ENCODE measurements at regions of chr7 and their contacts with region 1.

Region 1: GRCh38 chr7:75738987-75739795 is 450 bp upstream of the HIP1 start:
- DNase-seq: peak; percentile 99
- ATAC-seq: peak; percentile 88 to 91
- H3K4me3 ChIP-seq: peak overlapping the region; percentile 87 to 97 (median 96)
- H3K27ac ChIP-seq: peak overlapping the region; percentile 81 to 87 (median 84)
- H3K4me1 ChIP-seq: peaks cover 4 to 5% of the 10 kb centered on the region in 2 donors
- H3K27me3 ChIP-seq: no peaks in the 10 kb centered on the region
- CTCF ChIP-seq: peak; percentile 15 to 41 (median 32)
- POLR2A ChIP-seq: peak; percentile 27 to 36

Region 2: DNA sequence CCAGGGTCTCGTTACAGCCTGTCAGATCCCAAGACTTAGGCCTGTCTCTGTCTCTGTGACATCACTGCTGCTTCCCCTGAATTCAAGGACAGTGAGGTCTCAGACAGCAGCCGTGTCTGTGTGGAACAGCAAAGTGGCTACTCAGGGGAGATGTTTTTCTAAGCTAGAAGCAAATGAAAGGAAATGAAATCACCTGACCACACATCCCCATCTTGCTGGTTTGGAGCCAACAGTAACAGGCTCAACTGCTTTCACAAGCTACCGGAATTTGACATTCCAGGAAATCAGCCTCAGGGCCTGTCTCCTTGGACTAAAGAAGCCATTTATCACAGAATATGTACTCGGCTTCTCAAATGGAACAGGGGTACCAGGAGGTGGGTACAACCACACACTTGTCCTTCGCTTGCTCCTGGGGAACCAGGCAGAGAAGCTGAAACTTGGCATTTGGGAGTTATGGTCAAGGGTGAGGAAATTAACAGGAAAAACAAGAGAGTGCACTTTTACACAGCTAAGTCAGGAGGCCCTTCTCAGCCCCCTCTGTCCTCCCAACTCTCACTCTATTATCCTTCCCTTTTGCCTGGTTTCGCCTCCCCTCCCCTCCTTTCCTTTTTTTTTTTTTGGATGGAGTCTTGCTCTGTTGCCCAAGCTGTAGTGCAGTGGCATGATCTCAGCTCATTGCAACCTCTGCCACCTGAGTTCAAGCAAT is 173.9 kb before region 1 on chr7:
- in situ Hi-C with region 1: loop called in 1 of 4 experiments (anchors 25 kb)
- intact Hi-C with region 1: no loop called
- DNase-seq: no peak
- ATAC-seq: peak; percentile 53 to 56
- H3K4me3 ChIP-seq: no peak overlapping the region
- H3K27ac ChIP-seq: peak overlapping the region; percentile 46 to 69 (median 64)
- H3K4me1 ChIP-seq: peaks cover 0 to 3% of the 10 kb centered on the region in 2 donors
- H3K27me3 ChIP-seq: no peaks in the 10 kb centered on the region
- CTCF ChIP-seq: no peak
- POLR2A ChIP-seq: peak in 1 of 2 donors; percentile 14

Region 3: DNA sequence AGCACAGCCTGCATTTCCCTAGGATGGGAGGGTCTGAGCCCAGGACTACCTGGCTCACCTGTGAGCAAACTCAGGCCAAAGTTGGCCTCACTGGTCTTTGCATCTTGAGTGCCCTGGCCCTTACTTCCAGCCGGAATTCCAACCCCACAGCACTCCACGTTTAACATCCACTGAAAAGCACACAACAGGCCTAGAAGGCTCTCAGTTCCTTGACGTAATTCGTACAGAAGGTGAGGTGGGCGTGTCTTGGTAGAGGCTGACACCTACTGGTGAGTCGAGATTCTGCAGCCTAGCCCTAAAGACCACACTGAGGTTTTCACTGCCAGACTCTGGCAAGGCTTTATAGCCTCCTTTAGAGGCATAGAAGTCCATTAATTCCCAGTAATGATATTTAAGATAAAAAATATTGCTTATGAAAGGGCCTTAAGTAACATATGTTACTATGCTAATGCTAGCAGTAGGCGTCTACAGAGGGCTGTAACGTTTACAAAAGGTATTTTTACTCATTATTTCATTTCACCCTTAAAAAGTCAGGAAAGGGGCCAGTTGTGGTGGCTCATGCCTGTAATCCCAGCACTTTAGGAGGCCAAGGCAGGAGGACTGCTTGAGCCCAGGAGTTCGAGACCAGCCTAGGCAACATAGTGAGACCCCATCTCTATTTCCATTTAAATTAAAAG is 96.2 kb before region 1 on chr7:
- in situ Hi-C with region 1: loop called in 1 of 4 experiments (anchors 25 kb)
- intact Hi-C with region 1: no loop called
- DNase-seq: no peak
- ATAC-seq: peak in 1 of 2 donors; percentile 65
- H3K4me3 ChIP-seq: no peak overlapping the region
- H3K27ac ChIP-seq: no peak overlapping the region
- H3K4me1 ChIP-seq: peaks cover 10 to 18% of the 10 kb centered on the region in 2 donors
- H3K27me3 ChIP-seq: no peaks in the 10 kb centered on the region
- CTCF ChIP-seq: peak; percentile 63 to 77 (median 66)
- POLR2A ChIP-seq: no peak

Region 4: DNA sequence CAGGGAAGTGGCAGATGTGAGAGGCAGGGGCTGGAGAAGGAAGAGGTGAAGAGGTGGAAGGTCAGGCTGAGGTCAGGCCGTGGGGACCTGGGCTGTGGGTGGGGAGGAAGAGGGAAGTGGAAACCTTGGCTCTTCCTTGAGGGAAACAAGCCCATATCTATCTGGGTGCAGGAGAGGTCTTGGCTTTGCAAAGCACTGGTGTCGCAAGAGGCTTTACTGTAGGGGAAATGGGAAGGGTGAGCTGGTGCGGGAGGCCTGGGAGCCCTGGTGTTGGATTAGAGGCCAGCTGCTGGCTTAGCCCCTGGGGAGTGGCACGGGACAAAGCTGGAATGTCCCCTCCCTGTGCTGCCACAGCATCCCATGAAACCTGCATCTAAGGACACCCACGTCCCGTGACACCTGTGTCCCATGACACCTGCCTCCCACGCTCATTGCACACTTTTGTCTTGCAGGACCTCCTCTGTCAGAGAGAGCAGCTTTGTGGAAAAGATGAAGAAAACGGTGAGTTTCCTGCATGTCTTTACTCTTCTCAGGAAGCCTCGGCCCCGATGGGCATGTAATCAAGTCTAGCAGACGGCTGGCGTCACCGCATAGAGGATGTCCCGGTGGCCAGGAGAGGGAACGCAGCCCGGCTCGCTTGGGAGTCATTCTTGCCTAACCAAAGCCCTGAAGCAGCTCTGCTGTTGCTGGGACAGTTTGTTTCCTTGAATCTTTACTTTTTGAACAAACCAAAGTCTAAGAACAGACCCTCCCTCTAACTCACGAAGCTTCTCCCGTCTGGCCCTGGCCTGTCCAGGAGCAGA is 233.0 kb after region 1 on chr7:
- in situ Hi-C with region 1: no loop called
- intact Hi-C with region 1: no loop called
- DNase-seq: peak; percentile 83 to 90
- ATAC-seq: peak; percentile 53 to 56
- H3K4me3 ChIP-seq: no peak overlapping the region
- H3K27ac ChIP-seq: peak overlapping the region; percentile 91 to 97 (median 94)
- H3K4me1 ChIP-seq: peaks cover 40 to 65% of the 10 kb centered on the region in 2 donors
- H3K27me3 ChIP-seq: no peaks in the 10 kb centered on the region
- CTCF ChIP-seq: peak in 3 of 5 experiments; percentile 24 to 47 (median 30)
- POLR2A ChIP-seq: peak in 1 of 2 donors; percentile 11

Region 5: DNA sequence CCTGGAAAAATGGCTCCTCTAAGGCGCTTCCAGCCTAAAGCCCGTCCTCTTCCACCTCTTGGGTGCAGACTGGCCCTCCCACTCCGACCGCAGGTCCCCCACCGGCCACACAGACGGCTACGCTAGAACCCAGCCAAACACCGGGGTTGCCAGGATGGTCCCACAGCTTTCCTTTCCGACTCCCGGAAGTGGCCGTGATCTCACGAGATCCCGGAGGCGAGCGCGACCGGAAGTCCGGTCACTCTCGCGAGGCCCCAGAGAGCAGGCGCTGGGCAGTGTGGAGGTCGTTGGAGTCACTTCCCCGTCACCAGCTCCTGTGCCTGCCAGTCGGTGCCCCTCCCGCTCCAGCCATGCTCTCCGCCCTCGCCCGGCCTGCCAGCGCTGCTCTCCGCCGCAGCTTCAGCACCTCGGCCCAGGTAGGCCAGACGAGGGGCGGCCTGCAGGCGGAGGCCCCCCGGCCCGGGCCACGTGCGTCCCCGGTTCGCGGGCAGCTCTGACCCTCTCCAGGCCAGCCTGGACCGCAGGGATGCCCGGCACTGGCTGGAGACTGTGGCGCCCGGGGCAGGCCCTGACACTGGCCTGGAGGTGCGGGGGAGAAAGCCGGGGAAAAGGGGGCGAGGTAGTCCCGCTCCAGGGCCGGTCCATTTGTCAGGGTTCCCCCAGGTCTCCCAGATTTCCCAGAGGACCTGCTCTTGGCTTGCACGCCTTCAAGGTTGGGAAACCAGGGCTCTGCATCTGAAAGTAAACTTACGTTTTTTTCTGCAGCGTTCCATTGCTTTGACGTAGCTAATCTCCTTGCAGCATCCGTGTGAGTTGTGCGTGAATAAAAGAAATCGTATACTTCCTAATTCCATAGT is 308.8 kb after region 1 on chr7 and contains the starts of genes MDH2 and STYXL1:
- in situ Hi-C with region 1: loop called in 3 of 4 experiments (anchors 25 kb)
- intact Hi-C with region 1: no loop called
- DNase-seq: peak; percentile 92 to 96
- ATAC-seq: peak; percentile 90 to 96
- H3K4me3 ChIP-seq: peak within 1 kb of the TSS; percentile 89 to 98 (median 94)
- H3K27ac ChIP-seq: peak within 1 kb of the TSS; percentile 93 to 98 (median 96)
- H3K4me1 ChIP-seq: peaks cover 43 to 51% of the 10 kb centered on the region in 2 donors
- H3K27me3 ChIP-seq: no peaks in the 10 kb centered on the region
- CTCF ChIP-seq: no peak
- POLR2A ChIP-seq: peak; percentile 84 to 92
- total RNA-seq, gene MDH2: 236 to 344 (median 284) TPM
- total RNA-seq, gene STYXL1: 10.0 to 31.5 (median 17.3) TPM